Activated B cell treated with CpG ODN at 0.5 μM for 24 hours (primary cell): ENCODE measurements at regions of chr13 and their contacts with region 1.

Region 1: DNA sequence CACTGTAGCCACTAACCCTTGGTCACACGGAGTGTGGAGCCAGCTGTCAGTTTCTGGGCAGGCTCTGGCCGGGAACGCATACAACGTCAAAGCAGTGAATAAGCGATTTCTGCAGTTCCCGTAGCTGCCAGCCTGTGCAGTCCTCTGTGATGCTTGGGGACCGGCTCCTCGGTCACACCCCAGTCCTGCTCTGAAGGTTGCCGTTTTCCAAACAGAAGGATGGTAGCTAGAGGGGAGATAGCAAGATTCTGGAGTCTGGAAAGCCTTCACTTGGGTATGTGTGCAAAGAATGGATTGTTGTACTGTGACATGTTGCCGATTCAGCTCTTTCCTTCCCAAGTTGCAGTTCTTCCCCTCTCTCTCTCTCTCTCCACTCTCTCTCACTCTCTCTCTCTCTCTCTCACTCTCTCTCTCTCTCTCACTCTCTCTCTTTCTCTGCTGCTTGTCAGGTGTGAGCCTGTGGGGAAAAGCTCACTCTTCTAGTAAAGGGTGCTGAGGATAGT is 38.7 kb upstream of the C1QTNF9 start:
- DNase-seq: no peak
- ATAC-seq: peak; percentile 55
- H3K4me3 Mint-ChIP-seq: peak overlapping the region; percentile 87
- H3K27ac Mint-ChIP-seq: peak overlapping the region; percentile 95
- H3K4me1 Mint-ChIP-seq: peaks cover 76% of the 10 kb centered on the region
- H3K27me3 Mint-ChIP-seq: no peaks in the 10 kb centered on the region
- CTCF ChIP-seq: no peak

Region 2: GRCh38 chr13:24053519-24054251 is 217.0 kb before region 1 on chr13:
- CTCF ChIA-PET with region 1: no interaction called
- POLR2A ChIA-PET with region 1: no interaction called
- intact Hi-C with region 1: loop called (anchors 1 kb)
- DNase-seq: peak; percentile 18
- ATAC-seq: peak; percentile 92
- H3K4me3 Mint-ChIP-seq: no peak overlapping the region
- H3K27ac Mint-ChIP-seq: no peak overlapping the region
- H3K4me1 Mint-ChIP-seq: peaks cover 9% of the 10 kb centered on the region
- H3K27me3 Mint-ChIP-seq: peaks cover 9% of the 10 kb centered on the region
- CTCF ChIP-seq: no peak

Region 3: GRCh38 chr13:24228852-24229458 is 41.7 kb before region 1 on chr13:
- CTCF ChIA-PET with region 1: interaction called, 16 read pairs
- POLR2A ChIA-PET with region 1: interaction called, 4 read pairs
- intact Hi-C with region 1: loop called (anchors 2 kb)
- DNase-seq: no peak
- ATAC-seq: peak; percentile 58
- H3K4me3 Mint-ChIP-seq: no peak overlapping the region
- H3K27ac Mint-ChIP-seq: no peak overlapping the region
- H3K4me1 Mint-ChIP-seq: peaks cover 27% of the 10 kb centered on the region
- H3K27me3 Mint-ChIP-seq: no peaks in the 10 kb centered on the region
- CTCF ChIP-seq: peak; percentile 99

Region 4: DNA sequence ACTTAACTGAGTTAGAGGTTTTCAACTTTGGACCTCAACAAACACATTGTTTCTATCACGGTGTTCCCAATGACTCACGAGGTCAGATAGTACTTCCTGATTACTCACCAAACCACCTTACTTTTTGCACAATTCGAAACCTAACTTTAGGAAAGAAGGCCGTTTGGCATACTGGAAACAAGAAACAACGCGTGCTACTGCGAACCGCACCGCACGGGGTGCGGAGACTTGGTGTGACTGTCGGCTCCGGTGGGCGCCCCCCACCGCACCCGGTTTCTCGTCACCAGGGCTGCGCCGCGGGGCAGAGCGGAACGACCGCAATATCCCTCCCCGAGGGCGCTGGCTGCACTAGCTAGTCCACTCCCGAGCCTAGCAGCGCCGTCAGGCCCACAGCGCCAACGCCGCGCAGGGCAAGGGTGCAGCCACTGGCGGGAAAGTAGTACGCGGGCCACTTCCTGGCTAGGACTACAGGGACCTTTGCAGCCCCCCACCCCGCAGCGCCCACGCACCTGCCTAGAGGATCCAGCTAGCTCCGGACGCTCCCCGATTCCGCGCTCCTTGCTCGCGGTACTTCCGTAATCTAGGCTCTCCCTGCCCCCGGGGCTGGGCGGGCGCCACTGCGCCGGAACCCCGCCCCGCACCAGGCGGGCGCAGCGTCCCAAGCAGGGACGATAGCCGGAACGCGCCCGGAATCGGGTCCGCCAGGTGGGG is 241.7 kb after region 1 on chr13 and contains the start of gene PARP4:
- CTCF ChIA-PET with region 1: no interaction called
- POLR2A ChIA-PET with region 1: no interaction called
- intact Hi-C with region 1: loop called (anchors 2 kb)
- DNase-seq: peak; percentile 70
- ATAC-seq: peak; percentile 81
- H3K4me3 Mint-ChIP-seq: peak within 1 kb of the TSS; percentile 92
- H3K27ac Mint-ChIP-seq: peak within 1 kb of the TSS; percentile 88
- H3K4me1 Mint-ChIP-seq: peaks cover 24% of the 10 kb centered on the region
- H3K27me3 Mint-ChIP-seq: no peaks in the 10 kb centered on the region
- CTCF ChIP-seq: no peak
- total RNA-seq, gene PARP4: 50.0 and 56.7 TPM in 2 replicates